ENCODE measurements at regions of chr1 and their contacts with region 1.

Region 1: DNA sequence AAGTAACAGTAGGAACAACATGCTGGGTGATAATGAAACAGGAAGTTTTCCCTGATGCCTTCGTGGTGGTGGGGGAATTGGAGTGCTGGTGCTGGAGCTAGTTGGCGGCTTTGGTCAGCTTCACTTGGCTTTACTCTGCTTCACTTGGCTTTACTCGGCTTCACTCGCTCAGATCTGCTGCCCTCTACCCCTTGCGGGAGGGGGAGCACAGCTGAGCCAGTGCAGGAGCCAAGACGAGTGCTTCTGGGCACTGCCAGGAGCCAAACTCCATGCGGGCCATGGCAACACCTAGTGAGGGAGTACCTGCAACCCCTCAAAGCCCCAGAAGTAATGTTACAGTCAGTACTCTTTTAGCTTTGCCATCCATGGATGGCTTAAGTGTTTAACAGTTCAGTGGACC is 10.6 kb upstream of the PRKACB start:
- DNase-seq: no peak
- ATAC-seq: peak; percentile 26
- H3K4me3 ChIP-seq: no peak overlapping the region
- H3K27ac ChIP-seq: no peak overlapping the region
- H3K4me1 ChIP-seq: no peaks in the 10 kb centered on the region
- H3K27me3 ChIP-seq: no peaks in the 10 kb centered on the region
- CTCF ChIP-seq: no peak

Region 2: GRCh38 chr1:84298328-84298683 is 164.8 kb after region 1 on chr1:
- intact Hi-C with region 1: no loop called
- DNase-seq: peak; percentile 80
- ATAC-seq: peak; percentile 90
- H3K4me3 ChIP-seq: peak overlapping the region; percentile 93
- H3K27ac ChIP-seq: peak overlapping the region; percentile 89
- H3K4me1 ChIP-seq: peaks cover 29% of the 10 kb centered on the region
- H3K27me3 ChIP-seq: no peaks in the 10 kb centered on the region
- CTCF ChIP-seq: no peak

Region 3: DNA sequence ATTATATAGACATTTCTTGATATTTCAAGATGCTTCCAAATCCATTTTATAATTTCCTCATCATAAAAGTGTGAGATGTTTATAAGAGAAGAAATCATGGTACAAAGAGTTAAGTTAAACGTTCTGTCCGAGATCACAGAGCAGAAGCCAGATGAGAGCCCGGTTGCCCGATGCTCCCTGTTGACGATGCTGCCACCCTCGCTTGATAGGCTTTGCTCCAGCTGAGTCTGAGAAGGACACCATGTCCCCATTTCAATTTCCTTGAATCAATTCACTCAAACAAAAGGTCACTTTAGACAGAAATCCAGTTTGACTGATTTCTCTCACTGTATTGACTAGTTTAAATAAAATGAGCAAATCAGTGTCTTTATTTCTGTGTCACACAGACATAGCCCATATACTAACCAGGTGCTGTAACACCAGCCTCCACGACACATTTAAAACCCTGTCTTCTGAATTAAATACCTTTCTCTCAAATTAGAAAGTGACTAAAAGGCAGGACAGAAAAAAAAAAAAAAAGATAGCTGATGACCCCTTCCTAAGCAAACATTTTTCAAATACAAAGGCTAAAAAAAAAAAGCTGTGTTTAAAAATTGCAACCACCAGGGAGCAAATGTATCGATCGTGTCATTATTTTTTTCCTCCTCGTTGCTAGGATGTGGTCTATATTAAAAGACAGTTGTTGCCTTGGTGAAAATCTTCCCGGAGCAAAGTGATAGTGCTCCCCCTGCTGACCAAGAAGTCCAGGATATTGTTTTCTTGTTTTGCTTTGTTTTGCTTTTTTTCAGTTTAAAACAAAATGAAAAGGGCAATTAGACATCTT is 300.0 kb after region 1 on chr1:
- intact Hi-C with region 1: loop called (anchors 10 kb)
- DNase-seq: no peak
- ATAC-seq: peak; percentile 82
- H3K4me3 ChIP-seq: peak overlapping the region; percentile 19
- H3K27ac ChIP-seq: no peak overlapping the region
- H3K4me1 ChIP-seq: peaks cover 6% of the 10 kb centered on the region
- H3K27me3 ChIP-seq: no peaks in the 10 kb centered on the region
- CTCF ChIP-seq: peak; percentile 77

Region 4: DNA sequence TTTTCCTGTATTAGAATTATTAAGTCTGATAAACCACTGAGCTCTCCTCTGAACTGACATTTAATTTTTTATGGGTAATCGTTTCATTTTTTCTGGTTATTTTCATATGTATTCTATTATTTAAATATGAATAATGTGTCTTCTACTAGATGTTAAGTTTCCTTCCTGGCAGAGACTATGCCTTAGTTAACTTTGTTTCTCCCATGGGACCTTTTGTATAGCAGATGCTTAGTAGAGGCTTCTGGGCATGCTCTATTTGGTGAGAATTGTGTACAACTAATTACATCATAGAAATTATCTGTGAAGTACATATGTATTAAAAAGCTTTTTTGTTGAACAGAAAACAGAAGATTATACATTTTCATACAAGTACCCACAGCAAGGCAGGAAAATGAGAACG is 417.3 kb after region 1 on chr1:
- intact Hi-C with region 1: no loop called
- DNase-seq: no peak
- ATAC-seq: no peak
- H3K4me3 ChIP-seq: no peak overlapping the region
- H3K27ac ChIP-seq: no peak overlapping the region
- H3K4me1 ChIP-seq: no peaks in the 10 kb centered on the region
- H3K27me3 ChIP-seq: no peaks in the 10 kb centered on the region
- CTCF ChIP-seq: no peak